ENCODE measurements at regions of chr11 and their contacts with region 1.

Region 1: DNA sequence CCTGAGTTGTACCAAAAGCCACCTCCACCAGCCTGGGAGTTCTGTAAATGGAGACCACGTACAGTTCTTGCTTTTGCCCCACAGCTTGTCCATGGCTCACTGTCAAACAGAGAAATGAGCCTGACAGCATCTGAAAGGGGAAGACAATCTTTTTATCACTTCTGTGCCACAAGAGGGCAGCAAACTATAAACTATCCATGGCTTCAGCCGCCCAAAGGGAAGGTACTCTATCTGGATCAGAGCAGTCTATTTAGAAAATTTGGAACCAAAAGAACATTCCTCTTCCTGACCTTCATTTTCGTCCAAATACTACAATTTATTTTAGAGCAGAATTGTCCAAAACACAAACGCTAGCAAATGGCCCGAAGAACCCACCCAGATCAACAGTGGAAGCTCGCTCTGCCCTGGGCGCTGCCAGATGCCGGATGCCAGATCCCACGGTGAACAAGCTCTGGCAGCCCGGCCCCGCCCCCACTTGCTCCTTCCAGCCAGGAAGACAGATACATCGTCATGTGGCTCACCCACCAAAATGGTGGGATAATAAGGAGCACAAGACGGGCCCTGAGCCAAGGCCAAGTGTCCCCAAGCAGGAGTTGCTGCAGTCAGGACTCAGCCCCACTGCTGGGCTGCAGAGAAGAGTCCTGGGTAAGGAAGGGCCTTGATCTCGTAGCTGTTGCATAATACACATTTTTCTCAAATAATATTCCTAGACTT is 23.9 kb upstream of the SCGB1A1 start:
- DNase-seq: peak; percentile 72 to 80
- H3K4me3 ChIP-seq: no peak overlapping the region
- H3K4me3 Mint-ChIP-seq: no peak overlapping the region
- H3K27ac Mint-ChIP-seq: peak overlapping the region; percentile 38
- H3K4me1 ChIP-seq: peaks cover 65% of the 10 kb centered on the region
- H3K4me1 Mint-ChIP-seq: peaks cover 32% of the 10 kb centered on the region
- H3K27me3 ChIP-seq: no peaks in the 10 kb centered on the region
- H3K27me3 Mint-ChIP-seq: no peaks in the 10 kb centered on the region
- CTCF ChIP-seq: peak; percentile 66 to 74

Region 2: GRCh38 chr11:61967116-61967923 is 427.7 kb before region 1 on chr11 and contains the start of gene FTH1:
- CTCF ChIA-PET with region 1: no interaction called
- POLR2A ChIA-PET with region 1: no interaction called
- intact Hi-C with region 1: no loop called
- DNase-seq: peak; percentile 92 to 96
- H3K4me3 ChIP-seq: peak within 1 kb of the TSS; percentile 92
- H3K4me3 Mint-ChIP-seq: peak within 1 kb of the TSS; percentile 81
- H3K27ac Mint-ChIP-seq: peak within 1 kb of the TSS; percentile 93
- H3K4me1 ChIP-seq: peaks cover 35% of the 10 kb centered on the region
- H3K4me1 Mint-ChIP-seq: peaks cover 39% of the 10 kb centered on the region
- H3K27me3 ChIP-seq: no peaks in the 10 kb centered on the region
- H3K27me3 Mint-ChIP-seq: no peaks in the 10 kb centered on the region
- CTCF ChIP-seq: no peak
- total RNA-seq, gene FTH1: 1,282 and 1,565 TPM in 2 replicates

Region 3: GRCh38 chr11:62419314-62419929 is 24.4 kb after region 1 on chr11:
- CTCF ChIA-PET with region 1: interaction called, 32 read pairs
- POLR2A ChIA-PET with region 1: no interaction called
- intact Hi-C with region 1: no loop called
- DNase-seq: no peak
- H3K4me3 ChIP-seq: no peak overlapping the region
- H3K4me3 Mint-ChIP-seq: no peak overlapping the region
- H3K27ac Mint-ChIP-seq: no peak overlapping the region
- H3K4me1 ChIP-seq: peaks cover 24% of the 10 kb centered on the region
- H3K4me1 Mint-ChIP-seq: peaks cover 30% of the 10 kb centered on the region
- H3K27me3 ChIP-seq: no peaks in the 10 kb centered on the region
- H3K27me3 Mint-ChIP-seq: no peaks in the 10 kb centered on the region
- CTCF ChIP-seq: no peak

Region 4: GRCh38 chr11:62508268-62509058 is 113.5 kb after region 1 on chr11:
- CTCF ChIA-PET with region 1: interaction called, 10 read pairs
- POLR2A ChIA-PET with region 1: no interaction called
- intact Hi-C with region 1: loop called (anchors 2 kb)
- DNase-seq: peak; percentile 79 to 83
- H3K4me3 ChIP-seq: 0 out of 2 replicates have a peak overlapping the region, but pooled peaks have one; percentile 5
- H3K4me3 Mint-ChIP-seq: peak overlapping the region; percentile 58
- H3K27ac Mint-ChIP-seq: peak overlapping the region; percentile 85
- H3K4me1 ChIP-seq: peaks cover 56% of the 10 kb centered on the region
- H3K4me1 Mint-ChIP-seq: peaks cover 36% of the 10 kb centered on the region
- H3K27me3 ChIP-seq: no peaks in the 10 kb centered on the region
- H3K27me3 Mint-ChIP-seq: no peaks in the 10 kb centered on the region
- CTCF ChIP-seq: peak; percentile 41 to 74

Region 5: GRCh38 chr11:62560566-62561103 is 165.7 kb after region 1 on chr11:
- CTCF ChIA-PET with region 1: interaction called, 45 read pairs
- POLR2A ChIA-PET with region 1: no interaction called
- intact Hi-C with region 1: loop called (anchors 1 kb)
- DNase-seq: peak; percentile 97 to 98
- H3K4me3 ChIP-seq: no peak overlapping the region
- H3K4me3 Mint-ChIP-seq: peak overlapping the region; percentile 50
- H3K27ac Mint-ChIP-seq: peak overlapping the region; percentile 71
- H3K4me1 ChIP-seq: peaks cover 74% of the 10 kb centered on the region
- H3K4me1 Mint-ChIP-seq: peaks cover 59% of the 10 kb centered on the region
- H3K27me3 ChIP-seq: no peaks in the 10 kb centered on the region
- H3K27me3 Mint-ChIP-seq: no peaks in the 10 kb centered on the region
- CTCF ChIP-seq: peak; percentile 91 to 94

Measured in Caco-2 (cell line).